Sciatic nerve (tissue), 2 donors: ENCODE measurements at regions of chr4 and their contacts with region 1.

Region 1: DNA sequence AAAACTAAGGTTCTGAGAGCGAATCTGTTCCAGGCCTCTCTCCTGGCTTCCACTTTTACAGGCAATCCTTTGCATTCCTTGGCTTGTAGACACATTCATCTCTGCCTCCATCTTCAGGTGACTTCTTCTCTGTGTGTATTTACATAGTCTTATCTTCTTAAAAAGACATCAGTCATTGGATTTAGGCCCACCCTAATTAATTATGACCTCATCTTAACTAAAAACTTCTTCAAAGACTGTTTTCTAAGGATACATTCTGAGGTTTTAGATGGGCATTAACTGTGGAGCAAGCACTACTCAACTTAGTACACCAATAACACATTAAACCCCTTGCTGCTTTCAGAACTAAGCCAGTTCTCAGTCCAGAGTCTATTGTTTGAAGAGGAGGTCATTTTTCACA is 1779.5 kb upstream of the AGA start:
- DNase-seq: no peak
- ATAC-seq: no peak

Region 2: GRCh38 chr4:179285696-179286095 is 63.9 kb after region 1 on chr4:
- intact Hi-C with region 1: loop called (anchors 2 kb)
- DNase-seq: no peak
- ATAC-seq: no peak